Right cardiac atrium (tissue), 5 donors: ENCODE measurements at regions of chrX and their contacts with region 1.

Region 1: GRCh38 chrX:153800177-153800722 is 5.8 kb downstream of the SSR4 start:
- DNase-seq: no peak
- ATAC-seq: peak; percentile 9 to 49
- H3K4me3 ChIP-seq: no peak overlapping the region
- H3K27ac ChIP-seq: peak overlapping the region; percentile 22
- H3K4me1 ChIP-seq: no peaks in the 10 kb centered on the region
- H3K27me3 ChIP-seq: no peaks in the 10 kb centered on the region

Region 2: GRCh38 chrX:153488231-153488914 is 311.9 kb before region 1 on chrX:
- intact Hi-C with region 1: no loop called
- DNase-seq: peak; percentile 72 to 90 (median 89)
- ATAC-seq: peak; percentile 74 to 77
- H3K4me3 ChIP-seq: no peak overlapping the region
- H3K27ac ChIP-seq: peak overlapping the region; percentile 55
- H3K4me1 ChIP-seq: peaks cover 1% of the 10 kb centered on the region
- H3K27me3 ChIP-seq: no peaks in the 10 kb centered on the region

Region 3: DNA sequence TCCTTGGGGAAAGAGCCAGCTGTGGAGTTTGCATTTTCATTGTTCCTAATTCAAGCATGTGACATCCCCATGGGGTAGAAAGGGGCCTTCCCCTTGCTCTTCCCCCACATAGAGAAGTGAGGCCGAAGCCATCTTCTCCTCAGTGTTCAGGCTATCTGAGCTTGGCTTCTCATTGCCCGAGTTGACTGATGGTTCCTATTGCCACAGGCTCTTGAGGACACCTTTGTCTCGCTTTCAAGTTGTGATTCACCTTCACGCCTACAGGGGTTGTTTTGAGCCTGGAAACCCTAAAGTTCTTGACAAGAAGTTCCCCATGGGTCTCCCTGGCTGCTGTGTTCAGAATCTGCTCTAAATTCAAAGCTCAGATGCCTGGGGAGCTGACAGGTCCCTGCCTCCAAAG is 226.3 kb before region 1 on chrX:
- intact Hi-C with region 1: no loop called
- DNase-seq: no peak
- ATAC-seq: no peak
- H3K4me3 ChIP-seq: no peak overlapping the region
- H3K27ac ChIP-seq: no peak overlapping the region
- H3K4me1 ChIP-seq: no peaks in the 10 kb centered on the region
- H3K27me3 ChIP-seq: no peaks in the 10 kb centered on the region

Region 4: DNA sequence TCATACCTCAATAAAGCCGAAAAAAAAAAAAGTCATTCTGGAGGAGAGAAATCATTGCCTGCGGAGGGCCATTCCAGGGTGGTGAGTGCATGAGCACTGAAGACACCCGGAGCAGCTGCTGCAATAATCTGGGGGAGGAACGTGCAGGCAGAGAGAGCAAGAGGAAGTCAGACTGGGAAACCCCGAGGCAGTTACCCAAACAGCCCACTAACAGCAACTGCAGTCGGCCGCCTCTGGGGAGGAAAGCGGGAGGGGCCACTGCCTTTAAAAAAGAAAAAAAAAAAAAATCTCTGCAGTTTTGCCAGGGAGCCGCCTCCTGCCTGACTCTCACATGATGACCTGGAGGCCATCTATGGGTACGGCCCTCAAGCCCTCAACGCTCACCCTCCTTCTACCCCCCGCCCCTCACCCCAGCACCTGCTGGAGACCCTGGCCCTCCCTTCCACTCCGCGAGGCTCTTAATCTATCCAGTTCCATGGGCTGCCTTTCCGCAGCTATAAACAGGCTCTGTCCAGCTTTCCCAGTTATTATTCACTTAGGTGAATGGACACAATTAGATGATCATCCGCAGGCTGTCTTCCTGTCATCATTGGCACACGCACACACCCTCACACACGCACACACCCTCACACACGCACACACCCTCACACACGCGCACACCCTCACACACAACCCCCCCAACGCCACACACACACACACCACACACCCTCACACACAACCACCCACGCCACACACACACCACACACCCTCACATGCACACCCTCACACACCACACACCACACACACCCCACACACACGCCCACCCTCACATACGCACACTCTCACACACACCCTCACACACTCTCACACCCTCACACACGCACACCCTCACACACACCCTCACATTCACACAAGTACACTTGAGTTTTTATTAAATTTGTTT is 100.8 kb after region 1 on chrX:
- intact Hi-C with region 1: loop called in 1 of 4 experiments (anchors 10 kb)
- DNase-seq: peak in 2 of 3 donors; percentile 63 to 65
- ATAC-seq: peak; percentile 46 to 54
- H3K4me3 ChIP-seq: no peak overlapping the region
- H3K27ac ChIP-seq: peak overlapping the region; percentile 48
- H3K4me1 ChIP-seq: no peaks in the 10 kb centered on the region
- H3K27me3 ChIP-seq: no peaks in the 10 kb centered on the region

Region 5: DNA sequence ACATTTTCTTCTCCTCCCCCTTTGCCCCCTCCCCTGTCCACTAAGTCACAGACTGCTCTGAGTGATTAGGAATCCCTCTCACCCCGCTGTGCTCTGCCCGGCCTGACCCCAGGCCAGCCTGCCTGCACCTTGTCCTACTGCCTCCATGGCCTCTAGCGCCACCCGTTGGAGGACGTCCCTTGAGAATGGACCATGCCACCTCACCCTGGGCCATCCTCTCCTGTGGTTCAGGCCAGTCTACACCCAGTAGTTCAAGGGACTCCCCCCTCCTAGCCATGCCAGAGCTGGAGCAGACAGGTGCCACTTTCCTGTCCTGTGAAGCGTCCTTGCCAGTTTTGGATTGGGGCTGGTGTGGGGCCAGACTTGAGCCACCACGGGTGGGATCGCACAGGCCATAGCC is 229.2 kb after region 1 on chrX:
- intact Hi-C with region 1: no loop called
- DNase-seq: no peak
- ATAC-seq: no peak
- H3K4me3 ChIP-seq: no peak overlapping the region
- H3K27ac ChIP-seq: no peak overlapping the region
- H3K4me1 ChIP-seq: peaks cover 9% of the 10 kb centered on the region
- H3K27me3 ChIP-seq: no peaks in the 10 kb centered on the region